ENCODE measurements at regions of chr22 and their contacts with region 1.

Region 1: DNA sequence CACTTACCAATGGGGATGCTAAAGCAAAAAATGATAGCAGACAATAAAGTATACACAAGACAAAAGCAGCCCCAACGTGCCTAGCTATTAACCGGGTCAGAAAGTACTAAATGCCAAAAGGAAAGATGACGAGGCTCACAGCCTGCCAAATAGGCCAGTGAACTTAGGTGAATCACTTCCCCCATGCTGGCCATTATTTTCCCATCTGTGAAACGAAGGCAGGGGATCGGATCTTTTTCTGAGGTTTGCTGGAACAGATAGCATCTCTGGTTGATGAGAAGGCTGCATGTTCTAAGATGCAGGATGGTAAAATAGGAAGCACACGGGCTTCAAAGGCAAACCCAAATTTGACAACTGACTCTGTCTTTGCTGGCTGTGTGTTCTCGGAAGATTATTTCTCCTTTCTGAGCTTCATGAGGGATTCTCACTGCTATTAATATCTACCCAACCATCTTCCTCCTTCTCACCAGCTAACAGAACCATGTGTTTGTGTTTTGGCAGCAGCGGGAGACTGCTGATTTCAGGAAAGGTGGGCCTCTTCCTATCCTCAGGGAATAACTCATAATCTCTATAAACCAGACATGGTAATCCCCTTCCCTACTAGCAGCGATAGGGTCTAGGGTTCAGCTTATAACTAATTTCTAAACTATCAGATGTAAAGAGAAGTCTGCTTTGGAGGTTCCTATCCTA is 390.7 kb downstream of the LARGE1 start:
- DNase-seq: no peak
- H3K4me3 ChIP-seq: no peak overlapping the region
- H3K27ac ChIP-seq: no peak overlapping the region
- H3K4me1 ChIP-seq: no peaks in the 10 kb centered on the region
- H3K27me3 ChIP-seq: no peaks in the 10 kb centered on the region

Region 2: GRCh38 chr22:33519071-33519973 is 10.2 kb before region 1 on chr22:
- CTCF ChIA-PET with region 1: interaction called, 17 read pairs
- POLR2A ChIA-PET with region 1: no interaction called
- DNase-seq: peak; percentile 69 to 81 (median 74)
- H3K4me3 ChIP-seq: no peak overlapping the region
- H3K27ac ChIP-seq: no peak overlapping the region
- H3K4me1 ChIP-seq: peaks cover 0 to 8% (median 3%) of the 10 kb centered on the region in 4 experiments
- H3K27me3 ChIP-seq: no peaks in the 10 kb centered on the region

Region 3: GRCh38 chr22:33555814-33556522 is 26.4 kb after region 1 on chr22:
- CTCF ChIA-PET with region 1: no interaction called
- POLR2A ChIA-PET with region 1: no interaction called
- DNase-seq: no peak
- H3K4me3 ChIP-seq: no peak overlapping the region
- H3K27ac ChIP-seq: no peak overlapping the region
- H3K4me1 ChIP-seq: peaks cover 0 to 10% (median 0%) of the 10 kb centered on the region in 4 experiments
- H3K27me3 ChIP-seq: no peaks in the 10 kb centered on the region

Region 4: DNA sequence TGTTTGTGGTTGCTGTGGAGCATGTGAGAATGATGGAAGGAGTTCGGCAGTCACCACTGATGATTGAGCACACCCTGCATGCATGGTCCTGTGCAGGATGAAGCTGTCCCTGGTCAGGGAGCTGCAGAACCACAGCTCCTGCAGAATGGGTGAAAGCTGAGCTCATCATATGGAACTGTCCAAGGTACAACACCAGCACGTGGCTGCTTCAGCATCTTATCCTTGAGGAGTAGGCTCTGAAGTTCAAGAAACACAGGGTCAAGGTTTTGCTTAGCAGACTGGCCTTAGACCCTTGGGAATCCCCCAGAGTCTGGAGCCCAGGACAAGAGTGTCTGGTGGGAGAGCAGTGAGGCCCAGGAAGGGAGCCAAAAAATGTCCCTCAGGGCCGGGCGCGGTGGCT is 573.1 kb after region 1 on chr22:
- CTCF ChIA-PET with region 1: no interaction called
- POLR2A ChIA-PET with region 1: no interaction called
- DNase-seq: no peak
- H3K4me3 ChIP-seq: no peak overlapping the region
- H3K27ac ChIP-seq: no peak overlapping the region
- H3K4me1 ChIP-seq: no peaks in the 10 kb centered on the region
- H3K27me3 ChIP-seq: no peaks in the 10 kb centered on the region